Endothelial cell of umbilical vein (primary cell): ENCODE measurements at regions of chr15 and their contacts with region 1.

Region 1: DNA sequence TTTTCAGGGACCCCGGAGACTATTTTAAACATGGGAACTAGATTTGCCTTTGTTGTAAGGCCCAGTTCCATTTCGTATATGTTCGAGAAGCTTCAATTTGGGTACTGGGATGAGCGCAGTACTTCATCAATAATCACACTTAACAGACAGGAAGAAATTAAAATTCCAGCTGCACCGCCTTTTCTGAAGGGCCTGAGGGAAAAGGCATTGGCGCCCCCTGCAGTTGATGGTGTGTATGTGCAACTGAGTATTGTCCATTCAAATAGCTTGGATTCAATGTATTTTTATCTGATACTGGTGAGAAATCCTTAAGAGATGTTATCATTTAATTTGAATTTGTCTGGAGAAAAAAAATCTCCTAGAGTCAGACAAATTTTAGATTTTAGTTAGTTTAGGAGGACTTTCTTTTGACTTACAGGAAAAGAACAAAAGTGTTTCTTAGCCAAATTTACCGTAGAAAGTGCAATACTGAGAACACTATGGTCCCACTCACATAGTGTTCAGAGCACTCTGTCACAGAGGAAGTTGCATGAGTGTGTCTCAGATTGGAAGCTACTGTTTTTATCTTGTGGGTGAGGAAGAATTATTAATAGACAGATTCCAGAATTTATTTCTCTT is 5.4 kb upstream of the ALDH1A2 start:
- DNase-seq: peak; percentile 73
- H3K4me3 ChIP-seq: no peak overlapping the region
- H3K27ac ChIP-seq: no peak overlapping the region
- H3K4me1 ChIP-seq: peaks cover 3% of the 10 kb centered on the region
- H3K27me3 ChIP-seq: no peaks in the 10 kb centered on the region
- CTCF ChIP-seq: peak; percentile 77 to 93
- POLR2A ChIP-seq: no peak

Region 2: GRCh38 chr15:57541805-57542504 is 529.0 kb before region 1 on chr15:
- CTCF ChIA-PET with region 1: interaction called, 13 read pairs
- POLR2A ChIA-PET with region 1: no interaction called
- dilution Hi-C with region 1: no loop called
- intact Hi-C with region 1: no loop called
- DNase-seq: peak; percentile 77
- H3K4me3 ChIP-seq: no peak overlapping the region
- H3K27ac ChIP-seq: no peak overlapping the region
- H3K4me1 ChIP-seq: peaks cover 6% of the 10 kb centered on the region
- H3K27me3 ChIP-seq: no peaks in the 10 kb centered on the region
- CTCF ChIP-seq: peak; percentile 82 to 91
- POLR2A ChIP-seq: no peak

Region 3: GRCh38 chr15:57706405-57707209 is 364.3 kb before region 1 on chr15 and contains the start of gene POLR2M:
- CTCF ChIA-PET with region 1: interaction called, 10 read pairs
- POLR2A ChIA-PET with region 1: no interaction called
- dilution Hi-C with region 1: no loop called
- intact Hi-C with region 1: no loop called
- DNase-seq: peak; percentile 99
- H3K4me3 ChIP-seq: peak within 1 kb of the TSS; percentile 18 to 71 (median 59)
- H3K27ac ChIP-seq: peak within 1 kb of the TSS; percentile 74
- H3K4me1 ChIP-seq: peaks cover 16% of the 10 kb centered on the region
- H3K27me3 ChIP-seq: no peaks in the 10 kb centered on the region
- CTCF ChIP-seq: no peak
- POLR2A ChIP-seq: peak; percentile 63
- total RNA-seq, gene POLR2M: 42.5 and 50.6 TPM in 2 replicates

Region 4: GRCh38 chr15:57806003-57806402 is 264.9 kb before region 1 on chr15:
- CTCF ChIA-PET with region 1: no interaction called
- POLR2A ChIA-PET with region 1: no interaction called
- dilution Hi-C with region 1: no loop called
- intact Hi-C with region 1: no loop called
- DNase-seq: no peak
- H3K4me3 ChIP-seq: no peak overlapping the region
- H3K27ac ChIP-seq: no peak overlapping the region
- H3K4me1 ChIP-seq: no peaks in the 10 kb centered on the region
- H3K27me3 ChIP-seq: no peaks in the 10 kb centered on the region
- CTCF ChIP-seq: no peak
- POLR2A ChIP-seq: no peak

Region 5: GRCh38 chr15:57866149-57866736 is 204.7 kb before region 1 on chr15:
- CTCF ChIA-PET with region 1: interaction called, 517 read pairs
- POLR2A ChIA-PET with region 1: no interaction called
- dilution Hi-C with region 1: loop called (anchors 25 kb)
- intact Hi-C with region 1: loop called (anchors 1 kb)
- DNase-seq: peak; percentile 72
- H3K4me3 ChIP-seq: no peak overlapping the region
- H3K27ac ChIP-seq: no peak overlapping the region
- H3K4me1 ChIP-seq: peaks cover 8% of the 10 kb centered on the region
- H3K27me3 ChIP-seq: no peaks in the 10 kb centered on the region
- CTCF ChIP-seq: peak; percentile 84 to 85
- POLR2A ChIP-seq: no peak

Region 6: GRCh38 chr15:57994221-57995049 is 76.5 kb before region 1 on chr15:
- CTCF ChIA-PET with region 1: interaction called, 14 read pairs
- POLR2A ChIA-PET with region 1: no interaction called
- dilution Hi-C with region 1: no loop called
- intact Hi-C with region 1: no loop called
- DNase-seq: peak; percentile 81
- H3K4me3 ChIP-seq: no peak overlapping the region
- H3K27ac ChIP-seq: no peak overlapping the region
- H3K4me1 ChIP-seq: peaks cover 9% of the 10 kb centered on the region
- H3K27me3 ChIP-seq: no peaks in the 10 kb centered on the region
- CTCF ChIP-seq: no peak
- POLR2A ChIP-seq: no peak

Region 7: GRCh38 chr15:58141894-58142293 is 71.0 kb after region 1 on chr15:
- CTCF ChIA-PET with region 1: interaction called, 12 read pairs
- POLR2A ChIA-PET with region 1: no interaction called
- dilution Hi-C with region 1: no loop called
- intact Hi-C with region 1: no loop called
- DNase-seq: no peak
- H3K4me3 ChIP-seq: no peak overlapping the region
- H3K27ac ChIP-seq: no peak overlapping the region
- H3K4me1 ChIP-seq: no peaks in the 10 kb centered on the region
- H3K27me3 ChIP-seq: peaks cover 10 to 11% of the 10 kb centered on the region in 2 experiments
- CTCF ChIP-seq: no peak
- POLR2A ChIP-seq: no peak

Region 8: DNA sequence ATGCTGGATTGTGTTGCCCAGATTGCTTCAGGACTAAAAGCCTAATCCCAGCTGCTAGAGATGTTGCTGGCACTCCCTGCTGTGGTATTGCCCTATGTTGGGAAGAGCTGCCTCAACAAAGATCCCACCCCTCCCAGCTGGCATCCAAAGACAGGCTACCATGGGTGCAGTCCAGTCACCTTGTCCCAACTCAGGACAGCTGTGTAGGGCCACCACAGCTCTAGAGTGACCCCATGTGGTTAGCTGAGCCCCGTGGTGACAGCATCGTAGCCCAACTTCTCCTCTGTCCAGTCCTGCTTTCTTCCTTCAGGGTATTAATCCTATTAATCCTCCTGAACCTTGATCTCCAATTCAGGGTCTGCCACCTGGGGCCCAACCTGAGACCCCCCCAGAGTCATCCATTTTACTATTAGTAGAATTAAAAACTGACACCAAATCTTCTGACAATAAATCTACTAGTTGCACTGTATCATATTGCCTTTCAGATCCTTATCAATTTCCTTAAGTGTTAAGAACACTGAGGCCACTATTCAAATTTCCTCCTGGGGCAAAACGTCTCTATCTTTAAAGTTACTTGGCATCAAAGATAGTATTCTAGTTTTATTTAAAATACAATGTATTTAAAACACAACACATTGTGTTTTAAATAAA is 150.8 kb after region 1 on chr15:
- CTCF ChIA-PET with region 1: interaction called, 23 read pairs
- POLR2A ChIA-PET with region 1: no interaction called
- dilution Hi-C with region 1: no loop called
- intact Hi-C with region 1: no loop called
- DNase-seq: peak; percentile 48
- H3K4me3 ChIP-seq: no peak overlapping the region
- H3K27ac ChIP-seq: no peak overlapping the region
- H3K4me1 ChIP-seq: no peaks in the 10 kb centered on the region
- H3K27me3 ChIP-seq: no peaks in the 10 kb centered on the region
- CTCF ChIP-seq: peak; percentile 67 to 72
- POLR2A ChIP-seq: no peak